Activated CD8-positive, alpha-beta T cell treated with anti-CD3 and anti-CD28 coated beads for 36 hours (primary cell): ENCODE measurements at regions of chr12 and their contacts with region 1.

Region 1: GRCh38 chr12:1795785-1796514 is 24.4 kb upstream of the LRTM2 start:
- DNase-seq: peak; percentile 94
- ATAC-seq: peak; percentile 95
- H3K4me3 Mint-ChIP-seq: peak overlapping the region; percentile 85
- H3K27ac Mint-ChIP-seq: peak overlapping the region; percentile 90
- H3K4me1 Mint-ChIP-seq: peaks cover 17% of the 10 kb centered on the region
- H3K27me3 Mint-ChIP-seq: no peaks in the 10 kb centered on the region
- CTCF ChIP-seq: peak; percentile 76

Region 2: GRCh38 chr12:1634590-1635191 is 161.3 kb before region 1 on chr12:
- CTCF ChIA-PET with region 1: interaction called, 135 read pairs
- POLR2A ChIA-PET with region 1: interaction called, 3 read pairs
- intact Hi-C with region 1: no loop called
- DNase-seq: peak; percentile 72
- ATAC-seq: peak; percentile 75
- H3K4me3 Mint-ChIP-seq: no peak overlapping the region
- H3K27ac Mint-ChIP-seq: no peak overlapping the region
- H3K4me1 Mint-ChIP-seq: peaks cover 10% of the 10 kb centered on the region
- H3K27me3 Mint-ChIP-seq: peaks cover 43% of the 10 kb centered on the region
- CTCF ChIP-seq: peak; percentile 81

Region 3: GRCh38 chr12:1650260-1650977 is 145.5 kb before region 1 on chr12:
- CTCF ChIA-PET with region 1: interaction called, 456 read pairs
- POLR2A ChIA-PET with region 1: interaction called, 4 read pairs
- intact Hi-C with region 1: loop called (anchors 1 kb)
- DNase-seq: no peak
- ATAC-seq: no peak
- H3K4me3 Mint-ChIP-seq: no peak overlapping the region
- H3K27ac Mint-ChIP-seq: no peak overlapping the region
- H3K4me1 Mint-ChIP-seq: no peaks in the 10 kb centered on the region
- H3K27me3 Mint-ChIP-seq: peaks cover 8% of the 10 kb centered on the region
- CTCF ChIP-seq: no peak

Region 4: GRCh38 chr12:1690578-1691122 is 105.3 kb before region 1 on chr12 and contains the start of gene ADIPOR2:
- CTCF ChIA-PET with region 1: interaction called, 13 read pairs
- POLR2A ChIA-PET with region 1: interaction called, 3 read pairs
- intact Hi-C with region 1: no loop called
- DNase-seq: peak; percentile 95
- ATAC-seq: peak; percentile 98
- H3K4me3 Mint-ChIP-seq: peak within 1 kb of the TSS; percentile 98
- H3K27ac Mint-ChIP-seq: peak within 1 kb of the TSS; percentile 99
- H3K4me1 Mint-ChIP-seq: peaks cover 36% of the 10 kb centered on the region
- H3K27me3 Mint-ChIP-seq: no peaks in the 10 kb centered on the region
- CTCF ChIP-seq: no peak
- total RNA-seq, gene ADIPOR2: 48.3 to 49.9 TPM

Region 5: DNA sequence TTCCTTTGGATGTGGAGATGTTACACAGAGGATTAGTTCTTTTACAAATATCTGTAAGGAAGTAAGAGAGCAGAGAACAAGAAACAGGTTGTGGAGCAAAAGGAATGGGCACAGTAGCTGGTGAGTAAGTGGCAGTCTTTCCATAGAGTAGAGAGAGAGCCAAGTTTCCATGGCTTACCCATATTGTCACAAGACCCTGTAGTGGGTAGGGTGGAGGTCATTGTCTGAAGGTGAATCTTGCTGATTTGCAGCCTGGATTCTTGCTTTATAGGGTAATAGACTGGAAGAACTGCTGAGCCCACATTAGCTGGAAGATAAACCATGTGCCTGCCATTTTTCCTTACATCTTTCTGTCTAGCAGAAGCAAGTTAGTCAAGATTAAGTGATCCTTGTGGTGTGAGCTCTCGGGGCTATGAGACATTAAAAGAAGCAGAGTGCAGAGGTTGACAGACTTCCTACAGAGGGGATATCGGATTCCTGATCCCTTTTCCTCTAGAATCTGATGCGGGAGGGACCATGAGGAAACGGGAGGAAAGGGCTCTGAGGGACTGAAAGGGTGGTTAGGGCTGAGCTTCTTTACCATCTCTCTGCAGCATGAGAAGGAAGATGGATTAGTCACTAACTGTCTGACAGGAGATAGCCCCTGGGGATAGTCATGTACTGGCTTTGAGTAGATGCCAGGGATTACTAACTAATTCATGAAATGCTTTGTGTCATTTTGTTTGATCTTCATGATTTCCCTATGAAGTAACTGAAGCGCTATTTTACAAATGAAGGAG is 19.6 kb before region 1 on chr12:
- CTCF ChIA-PET with region 1: interaction called, 19 read pairs
- POLR2A ChIA-PET with region 1: no interaction called
- intact Hi-C with region 1: no loop called
- DNase-seq: no peak
- ATAC-seq: no peak
- H3K4me3 Mint-ChIP-seq: no peak overlapping the region
- H3K27ac Mint-ChIP-seq: no peak overlapping the region
- H3K4me1 Mint-ChIP-seq: peaks cover 10% of the 10 kb centered on the region
- H3K27me3 Mint-ChIP-seq: no peaks in the 10 kb centered on the region
- CTCF ChIP-seq: no peak

Region 6: DNA sequence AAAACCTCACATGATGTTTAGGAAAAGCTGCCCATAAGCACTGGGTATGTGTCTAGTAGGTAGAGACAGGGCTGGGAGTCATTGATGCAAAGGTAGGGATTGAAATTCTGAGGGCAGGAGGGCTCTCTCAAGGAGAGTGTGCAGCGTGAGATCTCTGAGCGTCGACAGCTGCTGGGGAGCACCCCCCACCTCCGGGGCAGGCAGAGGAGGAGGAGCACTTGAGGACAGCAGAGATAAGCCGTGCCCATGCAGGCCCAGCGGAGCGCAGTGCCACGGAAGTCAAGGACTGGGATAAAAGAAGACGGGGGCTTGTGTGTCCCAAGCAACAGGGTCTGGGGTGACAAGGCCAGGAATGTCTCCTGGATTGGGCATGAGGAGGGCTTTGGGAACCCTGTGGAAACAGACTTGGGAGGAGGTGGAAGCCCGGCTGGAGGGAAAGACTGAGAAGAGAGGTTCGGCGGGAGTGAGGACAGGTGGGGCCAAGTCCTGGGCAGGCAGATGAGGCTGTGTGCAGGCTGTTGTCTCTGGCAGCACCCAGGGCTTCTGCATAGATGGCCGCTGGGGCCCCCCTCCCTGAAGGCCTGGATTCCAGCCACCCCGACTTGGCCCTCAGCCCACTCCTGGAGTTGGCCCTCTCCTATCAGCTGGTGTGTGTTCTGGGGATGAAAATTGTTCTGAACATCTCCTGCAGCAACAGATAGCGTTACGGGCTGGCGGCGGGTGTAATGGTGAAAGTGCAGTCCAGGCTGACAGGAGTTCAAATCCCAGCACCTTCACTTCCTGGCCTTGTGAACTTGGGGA is 120.6 kb after region 1 on chr12:
- CTCF ChIA-PET with region 1: interaction called, 10 read pairs
- POLR2A ChIA-PET with region 1: no interaction called
- intact Hi-C with region 1: no loop called
- DNase-seq: no peak
- ATAC-seq: no peak
- H3K4me3 Mint-ChIP-seq: no peak overlapping the region
- H3K27ac Mint-ChIP-seq: peak overlapping the region; percentile 82
- H3K4me1 Mint-ChIP-seq: peaks cover 15% of the 10 kb centered on the region
- H3K27me3 Mint-ChIP-seq: peaks cover 2% of the 10 kb centered on the region
- CTCF ChIP-seq: no peak